ENCODE measurements at regions of chr11 and their contacts with region 1.

Region 1: DNA sequence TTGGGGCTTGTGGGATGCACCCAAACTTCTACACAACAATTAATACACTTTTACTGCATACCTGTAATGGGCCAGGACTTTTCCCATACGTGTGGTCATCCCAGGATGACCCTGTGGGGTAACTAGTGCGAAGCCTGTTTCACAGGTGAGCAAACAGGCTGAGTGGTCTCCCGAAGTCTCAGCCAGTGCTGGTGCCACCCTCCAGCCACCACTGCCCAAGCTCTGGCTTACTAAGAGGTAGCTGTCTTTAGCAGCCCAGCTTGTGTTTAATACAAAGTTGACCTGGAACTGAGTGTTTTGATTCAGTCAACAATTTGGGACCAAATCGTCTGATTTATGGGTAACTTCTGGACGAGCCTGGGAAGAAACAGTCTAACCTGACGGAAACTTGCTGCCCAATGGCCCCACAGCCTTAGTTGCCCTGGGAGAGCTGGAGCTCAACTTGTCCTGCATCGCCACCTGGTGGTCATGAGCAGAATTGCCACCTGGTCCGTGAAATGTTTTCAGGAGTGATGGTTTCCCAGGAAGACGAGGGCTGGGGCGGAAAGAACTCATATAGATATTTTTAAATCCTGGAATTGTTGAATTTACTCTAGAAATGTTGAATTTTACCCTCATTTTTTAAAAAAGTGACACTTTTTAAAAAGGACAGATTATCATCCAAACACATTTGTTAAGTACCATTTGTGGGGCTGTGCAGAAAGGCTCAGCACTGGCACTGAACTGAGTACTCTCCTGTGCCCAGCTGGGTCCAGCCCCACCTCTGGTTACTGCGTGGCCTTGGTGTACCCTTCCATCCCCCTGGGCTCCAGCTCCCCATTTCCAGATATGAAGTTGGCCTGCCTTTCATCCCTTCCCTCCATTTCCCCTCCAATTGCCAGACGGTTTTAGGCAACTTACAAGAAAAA is 95.5 kb upstream of the PARVA start:
- DNase-seq: peak; percentile 81
- H3K4me3 Mint-ChIP-seq: no peak overlapping the region
- H3K27ac Mint-ChIP-seq: no peak overlapping the region
- H3K4me1 Mint-ChIP-seq: peaks cover 2% of the 10 kb centered on the region
- H3K27me3 Mint-ChIP-seq: no peaks in the 10 kb centered on the region

Region 2: DNA sequence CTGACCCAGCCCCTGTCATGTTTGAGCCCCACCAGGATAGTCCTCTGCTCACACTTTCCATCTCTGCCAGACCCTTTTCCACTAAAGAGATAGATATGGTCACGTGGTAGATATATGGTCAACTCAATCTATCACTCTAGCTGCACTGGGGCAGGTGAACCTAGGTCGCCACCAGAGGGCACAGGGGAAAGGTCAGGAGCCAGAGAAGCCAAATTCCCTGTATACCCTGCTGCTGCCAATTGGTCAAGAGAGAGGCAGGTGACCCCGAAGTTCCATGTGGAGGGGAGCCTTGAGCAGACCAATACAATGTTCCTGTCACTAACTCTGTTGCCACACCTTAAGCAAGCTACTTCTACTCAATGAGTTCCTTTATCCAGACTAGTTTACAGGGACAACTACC is 559.0 kb before region 1 on chr11:
- CTCF ChIA-PET with region 1: no interaction called
- POLR2A ChIA-PET with region 1: no interaction called
- DNase-seq: no peak
- H3K4me3 Mint-ChIP-seq: no peak overlapping the region
- H3K27ac Mint-ChIP-seq: no peak overlapping the region
- H3K4me1 Mint-ChIP-seq: no peaks in the 10 kb centered on the region
- H3K27me3 Mint-ChIP-seq: peaks cover 16% of the 10 kb centered on the region

Region 3: GRCh38 chr11:11931461-11932055 is 350.3 kb before region 1 on chr11:
- CTCF ChIA-PET with region 1: interaction called, 14 read pairs
- POLR2A ChIA-PET with region 1: no interaction called
- DNase-seq: no peak
- H3K4me3 Mint-ChIP-seq: no peak overlapping the region
- H3K27ac Mint-ChIP-seq: no peak overlapping the region
- H3K4me1 Mint-ChIP-seq: peaks cover 6% of the 10 kb centered on the region
- H3K27me3 Mint-ChIP-seq: no peaks in the 10 kb centered on the region

Region 4: DNA sequence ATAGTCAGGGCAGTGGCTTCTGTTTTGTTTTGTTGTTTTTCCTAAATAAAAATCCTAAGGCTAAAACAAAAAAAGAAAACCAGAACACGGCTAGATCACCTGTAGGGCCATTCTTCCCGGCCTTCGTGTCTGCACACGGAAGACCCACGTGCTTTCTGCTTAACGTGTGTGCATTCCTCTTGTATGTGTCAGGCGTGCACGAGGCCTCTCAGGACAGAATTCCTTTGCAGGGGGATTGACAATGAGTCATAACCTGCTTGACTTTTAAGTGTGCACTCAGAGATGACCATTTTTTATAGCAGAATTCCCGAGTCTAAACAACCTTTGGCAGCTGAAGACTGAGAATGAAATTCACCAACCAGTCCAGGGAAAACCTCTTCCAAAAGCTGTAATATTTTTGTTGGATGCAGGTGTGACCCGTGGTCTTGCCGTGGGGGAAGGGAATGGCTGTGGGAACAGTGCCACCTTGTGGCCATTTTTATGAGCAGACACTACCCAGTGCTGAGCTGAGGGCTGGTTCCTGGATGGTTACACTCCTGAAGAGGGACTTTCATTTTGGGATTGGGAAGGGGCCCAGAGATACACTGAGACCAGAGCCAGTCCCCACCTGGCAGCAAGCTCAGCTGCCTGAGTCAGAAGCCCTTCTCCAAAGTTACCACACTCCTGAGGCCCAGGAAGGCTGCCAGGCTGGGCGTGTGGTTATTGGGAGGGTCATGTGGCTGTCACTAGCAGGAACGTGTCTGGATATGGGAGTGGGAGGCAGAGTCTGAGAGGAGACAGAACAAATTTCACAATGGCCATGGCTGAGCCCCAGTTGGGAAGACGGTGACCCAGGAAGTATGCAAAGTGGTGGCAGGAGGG is 237.6 kb before region 1 on chr11:
- CTCF ChIA-PET with region 1: interaction called, 212 read pairs
- POLR2A ChIA-PET with region 1: interaction called, 3 read pairs
- DNase-seq: peak; percentile 72
- H3K4me3 Mint-ChIP-seq: no peak overlapping the region
- H3K27ac Mint-ChIP-seq: no peak overlapping the region
- H3K4me1 Mint-ChIP-seq: peaks cover 9% of the 10 kb centered on the region
- H3K27me3 Mint-ChIP-seq: peaks cover 4% of the 10 kb centered on the region

Region 5: DNA sequence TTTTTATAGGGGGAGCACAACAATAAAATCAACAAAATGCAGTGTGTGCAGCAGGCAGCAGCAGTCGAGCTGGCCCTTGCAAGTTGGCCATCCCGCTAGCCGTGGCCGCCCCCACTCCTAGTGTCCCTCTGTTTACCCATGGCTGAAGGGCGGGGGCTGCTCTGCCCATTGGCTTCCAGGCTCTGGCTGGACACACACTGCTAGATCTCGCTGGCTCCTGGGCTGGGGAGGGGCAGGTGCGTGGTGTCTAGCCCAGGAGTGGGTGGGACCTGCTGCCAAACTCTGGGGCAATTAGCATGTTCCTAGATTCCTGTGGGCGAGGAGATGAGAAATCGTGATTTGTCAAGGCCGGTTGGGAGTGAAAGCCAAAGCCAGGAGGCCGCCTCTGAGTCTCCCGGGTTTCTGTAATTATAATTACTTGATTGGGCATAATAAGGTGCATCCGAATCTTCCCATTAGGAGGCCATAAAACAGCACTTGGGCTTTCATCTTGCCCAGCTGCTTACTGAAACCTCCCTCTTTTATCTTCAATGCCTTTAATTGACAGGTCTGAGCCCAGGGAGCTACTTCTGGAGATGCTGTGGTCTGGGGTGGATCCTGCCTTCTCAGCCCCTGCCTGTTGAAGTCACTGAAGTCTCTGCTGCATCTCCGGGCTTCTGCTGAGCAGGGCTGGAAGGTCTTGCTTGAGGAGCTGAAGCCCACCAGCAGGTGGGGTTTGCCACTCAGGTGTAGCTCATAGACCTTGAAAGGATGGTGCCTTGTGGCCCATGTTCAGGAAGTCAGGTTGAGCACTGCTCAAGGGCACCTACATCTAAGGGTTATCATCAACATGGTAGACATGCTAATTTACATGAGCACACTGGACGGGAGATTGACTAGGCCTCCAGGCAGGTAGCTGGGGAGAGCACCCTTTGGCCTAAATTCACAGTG is 228.9 kb before region 1 on chr11:
- CTCF ChIA-PET with region 1: interaction called, 212 read pairs
- POLR2A ChIA-PET with region 1: interaction called, 4 read pairs
- DNase-seq: peak; percentile 44
- H3K4me3 Mint-ChIP-seq: no peak overlapping the region
- H3K27ac Mint-ChIP-seq: no peak overlapping the region
- H3K4me1 Mint-ChIP-seq: peaks cover 1% of the 10 kb centered on the region
- H3K27me3 Mint-ChIP-seq: no peaks in the 10 kb centered on the region

Region 6: DNA sequence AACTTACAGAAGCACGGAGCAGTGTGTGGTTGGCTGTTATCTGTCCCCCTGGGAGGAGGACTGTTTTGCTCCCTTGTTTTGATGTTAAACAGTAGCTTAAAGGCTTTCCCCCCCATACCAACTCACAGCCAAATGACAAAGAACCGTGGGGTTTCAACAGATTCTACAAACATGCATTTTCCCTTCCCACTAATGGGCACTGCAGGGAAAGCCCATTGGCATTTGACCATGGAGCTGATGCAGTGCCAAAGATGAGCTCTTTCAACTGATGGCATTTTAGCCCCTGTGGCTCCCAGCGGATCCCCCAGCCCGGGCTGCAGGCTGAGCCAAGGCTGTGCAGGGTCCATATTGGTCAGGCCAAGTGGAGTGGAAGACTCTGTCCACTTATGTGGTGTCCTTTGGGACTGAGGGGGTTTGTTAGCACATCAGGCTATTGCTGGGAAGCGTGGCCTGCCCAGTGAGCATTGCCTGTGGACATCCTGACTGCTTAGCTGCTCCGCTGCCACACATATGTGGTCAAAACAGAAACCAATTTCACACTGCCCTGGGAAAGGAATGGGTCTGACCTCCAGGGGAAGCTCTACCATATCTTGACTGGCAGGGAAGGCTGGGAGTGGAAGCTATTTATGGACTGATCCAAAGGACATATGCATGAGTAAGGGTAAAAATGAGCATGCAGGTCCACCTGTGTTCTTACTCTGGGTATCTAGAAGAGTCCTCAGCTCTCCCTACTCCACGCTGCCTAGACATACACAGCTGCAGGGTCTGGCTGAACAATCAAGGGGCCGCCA is 20.9 kb before region 1 on chr11:
- CTCF ChIA-PET with region 1: interaction called, 12 read pairs
- POLR2A ChIA-PET with region 1: no interaction called
- DNase-seq: no peak
- H3K4me3 Mint-ChIP-seq: no peak overlapping the region
- H3K27ac Mint-ChIP-seq: no peak overlapping the region
- H3K4me1 Mint-ChIP-seq: no peaks in the 10 kb centered on the region
- H3K27me3 Mint-ChIP-seq: no peaks in the 10 kb centered on the region

Region 7: GRCh38 chr11:12587333-12587991 is 305.6 kb after region 1 on chr11:
- CTCF ChIA-PET with region 1: no interaction called
- POLR2A ChIA-PET with region 1: no interaction called
- DNase-seq: no peak
- H3K4me3 Mint-ChIP-seq: no peak overlapping the region
- H3K27ac Mint-ChIP-seq: no peak overlapping the region
- H3K4me1 Mint-ChIP-seq: no peaks in the 10 kb centered on the region
- H3K27me3 Mint-ChIP-seq: peaks cover 11% of the 10 kb centered on the region